GM10248 (cell line): ENCODE measurements at regions of chr17 and their contacts with region 1.

Region 1: DNA sequence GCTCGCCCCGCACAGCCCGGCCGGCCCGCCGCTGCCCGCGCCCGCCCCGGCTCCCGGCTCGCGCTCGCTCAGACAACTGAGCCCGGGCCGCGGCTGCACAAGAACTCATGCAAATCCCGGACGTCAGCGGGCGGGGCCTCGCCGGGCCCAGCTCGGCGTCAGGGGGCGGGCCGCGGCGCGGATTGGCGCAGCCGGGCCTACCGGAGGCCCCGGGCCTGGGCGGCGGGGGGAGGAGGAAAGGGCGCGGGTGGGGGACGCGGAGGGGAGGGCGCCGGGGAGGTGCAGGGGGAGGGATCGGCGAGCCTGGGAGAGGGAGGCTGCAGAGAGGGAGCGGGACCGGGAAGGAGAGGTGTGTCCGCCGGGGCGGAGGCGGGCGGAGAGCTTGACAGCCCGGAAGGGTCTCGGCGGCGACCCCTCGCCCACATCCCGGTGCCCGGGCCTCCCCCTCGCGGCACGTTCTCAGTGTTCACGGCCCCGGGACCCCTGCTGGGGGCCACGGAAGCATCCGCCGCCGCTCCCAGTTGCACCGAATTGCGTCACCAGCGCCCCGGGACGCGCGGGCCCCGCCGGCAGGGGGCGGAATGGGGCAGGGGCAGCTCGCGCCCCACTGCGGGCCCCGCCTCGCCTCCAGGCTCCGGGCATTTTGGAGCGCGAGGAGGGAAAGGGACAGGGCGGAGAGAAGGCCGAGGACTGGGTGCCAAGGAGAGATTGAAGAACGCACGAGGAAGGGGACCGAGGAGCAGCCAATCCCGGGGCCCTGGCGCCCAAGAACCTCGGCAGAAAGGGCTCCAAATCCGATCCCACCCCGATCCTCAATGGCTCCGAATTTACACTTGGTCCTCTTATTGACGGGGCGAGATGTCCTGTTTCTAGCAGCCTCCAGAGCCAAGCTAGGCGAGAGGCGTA is at the start of gene CBX4:
- DNase-seq: peak; percentile 96
- CTCF ChIP-seq: peak; percentile 66

Region 2: DNA sequence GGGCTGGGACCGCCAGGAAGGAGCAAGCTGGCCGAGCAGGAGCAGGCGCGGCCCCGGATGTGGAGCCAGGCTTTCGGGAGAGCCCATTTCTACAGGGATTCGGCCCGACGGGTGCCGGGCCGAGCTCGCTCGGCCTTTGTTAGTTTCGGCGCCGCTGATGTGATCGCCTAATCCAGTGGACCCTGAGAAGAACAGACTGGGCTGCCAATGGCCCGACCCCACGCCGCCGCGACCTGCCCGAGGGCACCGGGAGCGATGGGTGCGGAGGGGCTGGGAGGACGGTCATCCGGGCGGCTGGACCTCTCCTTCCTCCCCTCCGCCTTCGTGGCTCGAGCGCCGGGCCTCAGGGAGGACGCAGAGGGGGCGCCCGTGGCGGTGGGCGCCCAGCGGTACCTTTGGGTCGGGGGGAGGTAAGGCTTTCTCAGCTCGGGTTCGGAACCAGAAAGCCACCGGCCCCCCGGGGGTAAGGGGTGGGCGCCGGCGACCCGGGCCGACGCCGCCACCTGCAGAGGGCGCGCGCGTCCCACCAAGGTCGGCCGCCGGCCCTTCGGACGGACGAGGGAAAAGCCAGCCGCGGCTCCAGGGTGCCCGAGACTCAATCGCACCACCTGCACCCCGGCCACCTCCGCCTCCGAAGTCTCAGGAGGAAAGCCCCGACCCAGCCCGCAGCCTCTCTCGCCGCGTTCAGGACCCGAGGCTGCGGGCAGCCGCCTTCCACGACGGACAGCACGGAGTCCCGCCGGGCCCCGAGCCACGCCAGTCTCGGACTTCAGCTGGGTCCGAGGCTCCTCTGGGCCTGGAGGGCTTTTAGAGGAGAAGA is 49.9 kb before region 1 on chr17:
- CTCF ChIA-PET with region 1: interaction called, 12 read pairs
- POLR2A ChIA-PET with region 1: no interaction called
- DNase-seq: peak; percentile 83
- CTCF ChIP-seq: peak; percentile 75

Region 3: DNA sequence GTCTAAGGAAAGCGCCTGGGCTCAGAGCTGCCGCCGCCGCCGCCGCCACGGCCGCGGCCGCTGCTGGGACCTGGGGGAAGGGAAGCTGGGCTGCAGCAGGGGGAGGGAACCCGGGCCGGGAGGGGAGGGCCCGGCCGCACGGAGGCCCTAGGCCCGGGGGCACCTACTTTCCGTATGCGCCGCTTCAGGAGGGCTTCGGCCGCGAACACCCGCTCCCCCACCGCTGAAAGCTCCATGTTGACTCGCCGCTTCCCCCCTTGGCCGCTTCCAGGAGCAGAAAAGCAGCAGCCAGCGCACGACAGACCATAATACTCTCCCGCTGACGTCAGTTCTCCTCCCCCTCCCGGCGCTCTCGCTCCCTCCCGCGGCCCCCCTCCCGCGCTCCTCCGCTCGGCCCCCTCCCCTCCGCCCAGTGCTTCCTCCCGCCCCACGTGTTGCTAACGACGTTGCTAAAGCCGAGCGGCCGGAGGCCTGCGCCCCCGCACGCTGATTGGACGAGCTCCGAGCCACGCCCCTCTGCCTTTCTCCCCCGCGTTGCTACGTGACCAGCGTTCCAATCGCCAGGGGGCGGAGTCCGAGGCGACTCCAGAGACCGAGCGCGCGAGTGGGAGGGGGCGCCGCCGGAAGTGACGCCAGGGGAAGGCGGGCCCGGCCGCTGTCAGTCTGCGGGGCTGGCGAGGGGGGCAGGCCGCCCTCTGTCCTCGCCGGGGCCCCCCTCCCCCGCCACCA is 42.7 kb before region 1 on chr17 and contains the start of gene CBX8:
- CTCF ChIA-PET with region 1: interaction called, 6 read pairs
- POLR2A ChIA-PET with region 1: interaction called, 10 read pairs
- DNase-seq: peak; percentile 100
- CTCF ChIP-seq: peak; percentile 18

Region 4: GRCh38 chr17:79810130-79811010 is 29.2 kb before region 1 on chr17:
- CTCF ChIA-PET with region 1: interaction called, 28 read pairs
- POLR2A ChIA-PET with region 1: interaction called, 9 read pairs
- DNase-seq: peak; percentile 90
- CTCF ChIP-seq: no peak

Region 5: GRCh38 chr17:79818026-79818758 is 21.4 kb before region 1 on chr17:
- CTCF ChIA-PET with region 1: interaction called, 48 read pairs
- POLR2A ChIA-PET with region 1: interaction called, 5 read pairs
- DNase-seq: no peak
- CTCF ChIP-seq: no peak

Region 6: DNA sequence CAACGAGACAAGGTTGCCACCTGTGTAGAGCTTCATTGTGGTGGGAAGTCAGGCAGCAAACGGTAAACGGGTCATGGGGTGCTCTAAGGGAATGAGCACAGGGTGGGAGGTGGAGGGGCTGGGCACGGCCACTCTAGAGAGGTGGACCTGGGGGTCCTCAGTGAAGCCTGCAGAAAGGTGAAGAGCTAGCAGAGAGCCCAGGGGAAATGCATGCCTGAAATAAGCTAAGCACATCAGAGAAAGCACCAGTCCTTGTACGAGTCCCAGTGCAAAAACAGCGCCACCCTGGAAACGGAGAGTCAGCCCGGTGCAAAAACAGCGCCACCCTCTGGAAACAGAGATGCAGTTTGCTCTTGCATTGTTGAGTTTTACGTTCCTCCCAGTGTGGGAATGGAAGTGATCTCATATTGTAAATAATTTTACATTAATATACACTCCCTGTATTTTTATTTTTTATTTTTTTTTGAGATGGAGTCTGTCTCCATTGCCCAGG is 131.0 kb after region 1 on chr17:
- CTCF ChIA-PET with region 1: interaction called, 15 read pairs
- POLR2A ChIA-PET with region 1: interaction called, 6 read pairs
- DNase-seq: no peak
- CTCF ChIP-seq: peak; percentile 25